Panc1 (cell line): ENCODE measurements at regions of chr20 and their contacts with region 1.

Region 1: DNA sequence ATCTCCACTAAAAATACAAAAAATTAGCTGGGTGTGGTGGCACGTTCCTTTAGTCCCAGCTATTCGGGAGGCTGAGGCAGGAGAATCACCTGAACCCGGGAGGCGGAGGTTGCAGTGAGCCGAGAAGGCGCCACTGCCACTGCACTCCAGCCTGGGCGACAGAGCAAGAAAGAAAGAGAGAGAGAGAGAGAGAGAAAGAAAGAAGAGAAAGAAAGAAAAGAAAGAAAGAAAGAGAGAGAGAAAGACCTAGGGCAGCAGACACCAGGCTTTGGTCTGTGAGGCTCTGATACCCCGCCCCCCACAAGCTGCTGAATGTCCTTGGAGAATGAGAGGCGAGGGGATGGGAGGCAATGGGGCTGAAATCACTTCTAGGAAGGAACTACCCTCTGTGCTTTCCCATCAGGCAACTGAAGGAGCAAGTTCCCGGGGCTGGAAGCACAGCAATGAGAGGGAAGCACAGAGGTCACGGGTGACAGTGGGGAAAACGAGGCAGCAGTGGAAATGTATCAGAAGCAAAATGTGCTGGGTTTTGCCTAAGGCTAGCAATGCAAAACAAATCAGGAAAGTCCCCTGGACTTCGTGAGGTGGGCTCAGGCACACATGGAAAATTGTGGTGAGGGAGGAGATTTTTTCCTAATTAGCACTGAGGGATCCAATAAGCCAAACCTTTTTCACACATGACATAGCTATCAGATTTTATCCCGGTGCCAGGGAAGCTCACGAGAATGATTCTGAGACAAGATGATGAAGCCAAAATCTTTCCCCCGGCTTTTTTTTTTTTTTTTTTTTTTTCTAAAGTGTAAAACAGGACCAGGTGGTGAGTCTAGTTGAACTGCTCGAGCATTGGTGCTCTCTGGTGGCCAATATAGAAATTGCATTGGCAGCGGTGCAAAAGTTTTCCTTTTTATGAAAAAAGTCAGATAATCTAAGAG is 16.9 kb upstream of the ARFGEF2 start:
- DNase-seq: peak; percentile 63
- ATAC-seq: peak; percentile 73
- H3K4me3 ChIP-seq: peak overlapping the region in 1 of 2 experiments; percentile 25; a peak in 2 of 4 replicates
- H3K27ac ChIP-seq: peak overlapping the region; percentile 32; the same call in 1 of the 2 replicates
- H3K4me1 ChIP-seq: peaks cover 6% of the 10 kb centered on the region
- H3K27me3 ChIP-seq: no peaks in the 10 kb centered on the region
- CTCF ChIP-seq: peak; percentile 88

Region 2: DNA sequence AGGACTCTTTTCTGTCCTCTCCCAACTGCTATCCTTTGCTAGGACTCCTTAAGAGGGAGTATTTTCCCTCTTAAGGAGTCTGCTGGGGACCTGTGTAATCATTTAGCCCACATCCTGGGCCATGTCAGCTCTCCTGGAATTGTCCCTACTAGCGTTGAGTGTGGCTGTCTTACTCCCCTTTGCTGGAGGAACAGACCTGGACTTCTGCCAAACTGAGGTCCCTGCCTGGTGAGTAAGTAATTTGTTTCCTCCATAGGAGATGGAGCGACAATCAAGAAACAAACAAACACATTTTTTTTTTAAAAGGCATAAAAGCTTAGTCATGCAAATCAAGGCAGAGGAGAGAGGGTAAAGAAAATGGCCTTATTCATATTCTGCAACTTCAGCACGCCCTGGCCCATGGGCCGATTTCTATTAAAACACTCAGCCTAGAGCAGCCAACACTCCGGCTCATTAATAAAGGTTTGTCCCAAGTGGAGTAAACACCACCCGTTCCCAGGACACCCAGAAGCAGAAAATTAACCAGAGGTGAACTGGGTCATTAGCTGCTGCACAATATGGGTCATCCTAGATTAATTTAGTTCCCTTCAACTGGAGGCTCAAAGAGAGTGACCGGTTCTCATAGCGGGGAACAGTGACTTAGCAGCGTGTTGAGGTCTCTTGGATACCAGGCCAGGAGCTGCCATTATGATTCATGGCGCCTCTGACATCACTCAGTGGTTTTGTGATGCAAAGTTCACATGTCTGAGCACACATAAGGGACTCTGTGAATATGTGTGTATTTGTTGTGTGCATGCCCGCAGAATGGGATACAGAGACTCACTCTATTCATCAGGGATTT is 954.3 kb before region 1 on chr20:
- CTCF ChIA-PET with region 1: interaction called, 12 read pairs
- POLR2A ChIA-PET with region 1: no interaction called
- in situ Hi-C with region 1: no loop called
- intact Hi-C with region 1: no loop called
- DNase-seq: no peak
- ATAC-seq: peak; percentile 58; the same call in 1 of the 2 replicates
- H3K4me3 ChIP-seq: no peak overlapping the region
- H3K27ac ChIP-seq: no peak overlapping the region
- H3K4me1 ChIP-seq: no peaks in the 10 kb centered on the region
- H3K27me3 ChIP-seq: no peaks in the 10 kb centered on the region
- CTCF ChIP-seq: no peak

Region 3: GRCh38 chr20:48657475-48658470 is 246.9 kb before region 1 on chr20:
- CTCF ChIA-PET with region 1: interaction called, 35 read pairs
- POLR2A ChIA-PET with region 1: no interaction called
- in situ Hi-C with region 1: no loop called
- intact Hi-C with region 1: loop called (anchors 1 kb)
- DNase-seq: peak; percentile 70
- ATAC-seq: peak; percentile 84
- H3K4me3 ChIP-seq: no peak overlapping the region
- H3K27ac ChIP-seq: no peak overlapping the region
- H3K4me1 ChIP-seq: no peaks in the 10 kb centered on the region
- H3K27me3 ChIP-seq: no peaks in the 10 kb centered on the region
- CTCF ChIP-seq: peak; percentile 93

Region 4: GRCh38 chr20:48727254-48727937 is 177.2 kb before region 1 on chr20:
- CTCF ChIA-PET with region 1: no interaction called
- POLR2A ChIA-PET with region 1: interaction called, 10 read pairs
- in situ Hi-C with region 1: no loop called
- intact Hi-C with region 1: no loop called
- DNase-seq: no peak
- ATAC-seq: no peak
- H3K4me3 ChIP-seq: no peak overlapping the region
- H3K27ac ChIP-seq: no peak overlapping the region
- H3K4me1 ChIP-seq: peaks cover 13% of the 10 kb centered on the region
- H3K27me3 ChIP-seq: no peaks in the 10 kb centered on the region
- CTCF ChIP-seq: no peak

Region 5: DNA sequence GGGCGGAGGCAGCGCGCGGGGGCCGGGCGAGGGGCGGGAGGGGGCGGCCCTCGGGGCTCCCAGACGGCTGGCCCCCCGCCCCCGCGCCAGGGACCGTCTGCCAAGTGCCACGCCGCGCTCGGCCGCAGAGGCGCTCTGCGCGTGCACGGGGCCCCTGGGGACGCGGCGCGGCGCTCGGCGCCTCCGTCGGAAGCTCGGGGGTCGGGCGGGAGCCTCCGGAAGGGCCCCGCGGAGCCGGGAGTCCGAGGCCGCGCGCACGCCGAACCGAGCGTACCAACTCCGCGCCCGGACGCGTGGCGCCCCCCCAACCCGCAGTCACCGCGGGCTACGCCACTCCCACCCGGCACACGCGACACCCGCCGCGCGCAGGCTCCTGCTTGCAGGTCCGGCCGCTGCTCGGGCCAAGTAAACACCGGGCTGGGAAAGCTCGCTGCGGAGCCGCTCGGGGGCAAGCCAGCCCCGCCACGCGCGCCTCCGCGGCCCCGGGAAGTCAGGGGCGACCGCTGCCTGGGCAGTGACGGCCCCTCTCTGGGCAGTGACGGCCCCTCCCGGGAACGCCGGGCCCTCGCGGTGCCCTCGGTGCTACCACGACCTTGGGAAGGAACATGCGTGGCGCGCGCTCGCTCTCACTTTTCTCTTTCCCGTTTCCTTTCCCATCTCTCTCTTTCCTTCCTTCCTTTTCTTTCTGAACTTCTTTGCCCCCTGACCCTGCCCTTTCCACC is 76.4 kb before region 1 on chr20:
- CTCF ChIA-PET with region 1: interaction called, 3 read pairs
- POLR2A ChIA-PET with region 1: no interaction called
- in situ Hi-C with region 1: no loop called
- intact Hi-C with region 1: loop called (anchors 10 kb)
- DNase-seq: no peak
- ATAC-seq: peak; percentile 78
- H3K4me3 ChIP-seq: peak overlapping the region; percentile 52 to 59
- H3K27ac ChIP-seq: peak overlapping the region; percentile 81
- H3K4me1 ChIP-seq: peaks cover 58% of the 10 kb centered on the region
- H3K27me3 ChIP-seq: no peaks in the 10 kb centered on the region
- CTCF ChIP-seq: no peak; the same call in 1 of the 2 replicates